Mucosa of descending colon (tissue), 3 donors: ENCODE measurements at regions of chr1 and their contacts with region 1.

Region 1: DNA sequence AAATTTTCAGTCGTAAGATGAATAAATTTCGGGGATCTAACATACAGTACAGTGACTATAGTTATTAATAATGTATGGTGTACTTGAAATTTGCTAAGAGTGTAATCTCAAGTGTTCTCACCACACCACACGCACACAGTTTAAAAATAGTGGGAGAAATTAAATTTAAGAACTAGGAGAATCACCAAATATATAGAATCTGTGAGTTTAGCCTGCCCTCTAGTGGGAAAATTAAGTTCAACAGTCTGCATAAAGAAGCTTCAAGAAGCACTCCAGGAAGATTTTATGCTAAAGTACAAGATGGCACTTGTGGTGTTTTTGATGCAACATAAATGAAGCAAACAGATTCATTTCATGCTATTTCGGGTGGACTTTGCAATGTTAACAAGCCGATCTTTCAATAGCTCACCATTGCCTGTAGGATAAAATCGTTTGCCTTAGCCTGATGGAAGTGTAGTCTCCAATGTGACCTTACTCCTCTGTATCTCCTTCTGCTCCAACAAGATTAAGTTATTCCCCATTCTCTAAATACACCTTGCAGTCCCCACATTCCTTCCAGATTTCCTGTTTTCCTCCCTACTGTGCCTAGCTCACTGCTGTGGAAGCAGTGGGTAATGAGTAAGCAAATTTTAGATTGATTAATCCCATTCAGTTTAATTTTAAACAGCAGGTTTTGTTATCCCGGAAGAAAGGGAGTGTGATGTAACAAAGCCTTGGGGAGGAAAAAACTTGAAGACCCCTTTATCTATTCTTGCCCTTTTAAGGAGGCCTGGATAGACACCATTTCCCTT is 8.7 kb upstream of the PIK3C2B start:
- DNase-seq: peak in 1 of 3 donors; percentile 81
- ATAC-seq: peak; percentile 43
- H3K4me3 ChIP-seq: no peak overlapping the region
- H3K4me1 ChIP-seq: peaks cover 18% of the 10 kb centered on the region
- CTCF ChIP-seq: peak; percentile 55

Region 2: GRCh38 chr1:204431310-204432165 is 71.8 kb before region 1 on chr1:
- intact Hi-C with region 1: loop called in 1 of 2 experiments (anchors 5 kb)
- DNase-seq: peak; percentile 75 to 96 (median 80)
- ATAC-seq: peak; percentile 88
- H3K4me3 ChIP-seq: no peak overlapping the region
- H3K4me1 ChIP-seq: no peaks in the 10 kb centered on the region
- CTCF ChIP-seq: peak; percentile 81

Region 3: DNA sequence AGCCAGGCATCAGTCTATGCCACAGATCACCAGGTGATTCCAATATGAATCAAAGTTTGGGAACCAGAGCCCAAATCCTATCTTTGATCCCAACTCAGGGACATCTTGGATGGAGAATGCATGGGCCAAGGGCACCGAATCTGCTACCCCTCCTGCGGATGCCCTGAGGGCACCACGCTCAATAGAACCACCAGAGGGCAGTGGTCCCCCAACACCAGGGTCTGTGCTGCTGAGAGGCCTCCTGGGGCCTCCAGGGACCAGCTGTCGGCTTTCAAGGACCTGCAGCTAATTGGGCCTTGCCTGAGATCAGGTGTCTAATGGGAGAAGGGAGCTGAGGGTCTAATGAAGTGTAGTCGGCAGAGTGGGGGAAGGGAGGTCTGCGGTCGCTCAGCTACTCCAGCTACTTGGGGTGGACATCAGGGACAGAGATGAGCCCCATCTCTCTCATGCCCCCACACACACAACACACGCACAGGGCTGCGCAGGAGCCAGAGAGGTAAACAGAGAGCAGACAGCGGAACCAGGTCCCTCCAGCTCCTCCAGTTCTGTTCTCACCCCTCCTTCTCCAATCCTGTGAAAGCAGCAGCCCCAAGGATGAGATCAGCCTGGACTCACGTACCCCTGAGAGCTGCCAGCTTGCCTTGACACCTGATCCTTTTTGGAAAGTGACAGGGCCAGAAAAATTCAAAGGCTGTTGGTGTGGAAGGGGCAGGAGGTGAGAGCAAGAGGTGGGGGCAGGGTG is 56.8 kb before region 1 on chr1:
- intact Hi-C with region 1: loop called (anchors 5 kb)
- DNase-seq: peak; percentile 78 to 85 (median 81)
- ATAC-seq: peak; percentile 43
- H3K4me3 ChIP-seq: no peak overlapping the region
- H3K4me1 ChIP-seq: peaks cover 40% of the 10 kb centered on the region
- CTCF ChIP-seq: peak; percentile 58

Region 4: DNA sequence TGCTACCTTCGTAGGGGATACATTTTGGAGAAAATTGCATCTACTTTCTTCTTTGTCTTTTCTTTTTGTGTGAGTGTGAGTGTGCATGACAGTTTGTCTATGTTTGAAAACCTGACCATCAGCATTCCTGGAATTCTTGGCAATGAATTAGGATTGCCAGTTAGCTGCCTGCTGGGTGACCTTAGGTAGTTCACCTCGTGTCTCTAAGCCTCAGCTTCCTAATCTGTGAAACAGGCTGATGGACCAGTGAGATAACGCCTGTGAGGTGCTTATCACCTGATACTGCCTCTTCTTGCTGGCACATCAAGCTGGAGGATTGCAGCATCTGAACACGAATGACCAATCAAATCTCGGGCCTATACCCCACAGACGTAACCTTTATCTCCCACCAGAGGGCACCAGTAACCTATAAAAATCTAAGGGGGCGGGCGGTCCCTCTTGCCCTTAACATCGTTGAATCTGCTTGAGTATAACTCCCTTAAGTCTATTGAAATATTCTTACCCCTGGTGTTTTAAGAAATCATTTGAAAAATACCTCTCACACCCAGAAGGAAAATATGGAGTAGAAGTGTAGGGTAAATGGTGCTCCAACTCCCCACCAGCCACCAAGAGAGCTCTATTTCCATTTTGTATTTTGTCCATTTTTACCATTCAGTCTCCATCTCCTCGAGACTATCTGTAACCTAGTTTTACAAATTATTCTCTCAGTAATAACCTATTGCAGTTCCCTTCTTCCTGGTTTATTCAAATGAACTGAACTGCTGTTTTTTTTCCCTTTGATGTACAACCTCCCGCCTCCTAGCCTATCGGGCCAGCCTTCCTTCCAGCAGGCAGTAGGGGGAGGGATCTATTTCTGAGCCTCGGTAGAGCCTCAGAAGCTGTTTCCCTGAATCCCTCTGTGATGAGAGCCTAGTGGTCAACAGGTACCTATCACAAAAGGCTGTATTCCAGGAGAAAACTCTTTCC is 62.6 kb after region 1 on chr1:
- intact Hi-C with region 1: no loop called
- DNase-seq: peak in 1 of 3 donors; percentile 61
- ATAC-seq: peak; percentile 79
- H3K4me3 ChIP-seq: no peak overlapping the region
- H3K4me1 ChIP-seq: peaks cover 5% of the 10 kb centered on the region
- CTCF ChIP-seq: peak; percentile 29

Region 5: DNA sequence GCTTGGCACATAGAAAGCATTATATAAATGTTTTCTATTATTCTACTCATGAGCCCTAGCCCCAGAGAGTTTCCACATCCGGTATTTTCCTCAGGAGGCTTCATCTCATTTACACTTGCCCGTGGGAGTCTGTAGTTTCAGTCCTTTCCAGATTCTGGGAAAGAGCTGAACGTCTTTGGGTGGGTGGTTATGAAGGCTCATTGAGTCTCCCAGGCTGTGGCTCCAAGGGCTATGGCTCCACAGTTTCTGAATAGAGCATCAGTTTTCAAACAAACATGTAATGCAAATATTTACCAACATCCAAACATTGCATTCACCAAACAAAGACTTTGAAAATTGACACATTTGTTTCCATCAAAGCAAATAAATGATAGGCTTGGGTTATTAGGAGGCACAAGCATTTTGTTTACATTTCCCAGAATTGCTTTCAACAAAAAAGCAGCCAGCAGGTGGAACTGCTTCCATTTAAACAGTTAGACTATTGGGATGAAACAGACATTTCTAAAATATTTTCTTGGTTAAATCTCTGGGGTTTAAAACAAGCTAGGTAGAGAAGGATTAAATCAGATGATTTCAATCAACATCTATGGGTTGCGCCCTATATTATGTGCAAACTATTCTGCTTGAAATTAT is 919.8 kb after region 1 on chr1:
- intact Hi-C with region 1: no loop called
- DNase-seq: no peak
- ATAC-seq: no peak
- H3K4me3 ChIP-seq: no peak overlapping the region
- H3K4me1 ChIP-seq: no peaks in the 10 kb centered on the region
- CTCF ChIP-seq: no peak